Body of pancreas (tissue), 4 donors: ENCODE measurements at regions of chr2 and their contacts with region 1.

Region 1: GRCh38 chr2:197184959-197185586 is 125.5 kb downstream of the ANKRD44 start:
- DNase-seq: peak; percentile 72 to 82 (median 80)
- ATAC-seq: peak; percentile 88
- H3K4me3 ChIP-seq: no peak overlapping the region
- H3K27ac ChIP-seq: peak overlapping the region in 2 of 4 donors; percentile 15 to 25
- H3K4me1 ChIP-seq: peaks cover 9% of the 10 kb centered on the region
- H3K27me3 ChIP-seq: no peaks in the 10 kb centered on the region
- CTCF ChIP-seq: no peak
- POLR2A ChIP-seq: no peak

Region 2: DNA sequence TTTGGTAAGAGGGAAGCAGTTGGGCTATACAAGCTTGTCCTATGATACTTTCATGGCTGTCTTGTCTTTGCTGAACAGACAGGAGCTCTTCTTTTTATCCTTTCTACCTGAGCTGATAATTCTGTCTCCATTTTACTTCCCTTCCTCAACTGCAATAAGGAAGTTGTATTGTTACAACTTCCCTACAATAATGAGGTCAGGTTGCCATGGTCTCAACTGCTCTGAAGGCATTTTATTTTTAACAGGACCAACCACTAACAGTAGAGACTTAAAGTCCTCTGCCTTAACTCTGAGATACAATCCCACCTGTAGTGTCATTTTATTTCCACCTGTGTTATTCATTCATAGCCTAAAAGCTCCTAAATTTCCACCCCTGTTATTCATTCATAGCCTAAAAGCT is 140.0 kb before region 1 on chr2:
- intact Hi-C with region 1: no loop called
- DNase-seq: no peak
- ATAC-seq: no peak
- H3K4me3 ChIP-seq: no peak overlapping the region
- H3K27ac ChIP-seq: no peak overlapping the region
- H3K4me1 ChIP-seq: no peaks in the 10 kb centered on the region
- H3K27me3 ChIP-seq: no peaks in the 10 kb centered on the region
- CTCF ChIP-seq: no peak
- POLR2A ChIP-seq: no peak

Region 3: GRCh38 chr2:197059477-197059876 is 125.6 kb before region 1 on chr2:
- intact Hi-C with region 1: no loop called
- DNase-seq: no peak
- ATAC-seq: no peak
- H3K4me3 ChIP-seq: no peak overlapping the region
- H3K27ac ChIP-seq: no peak overlapping the region
- H3K4me1 ChIP-seq: no peaks in the 10 kb centered on the region
- H3K27me3 ChIP-seq: no peaks in the 10 kb centered on the region
- CTCF ChIP-seq: no peak
- POLR2A ChIP-seq: no peak

Region 4: DNA sequence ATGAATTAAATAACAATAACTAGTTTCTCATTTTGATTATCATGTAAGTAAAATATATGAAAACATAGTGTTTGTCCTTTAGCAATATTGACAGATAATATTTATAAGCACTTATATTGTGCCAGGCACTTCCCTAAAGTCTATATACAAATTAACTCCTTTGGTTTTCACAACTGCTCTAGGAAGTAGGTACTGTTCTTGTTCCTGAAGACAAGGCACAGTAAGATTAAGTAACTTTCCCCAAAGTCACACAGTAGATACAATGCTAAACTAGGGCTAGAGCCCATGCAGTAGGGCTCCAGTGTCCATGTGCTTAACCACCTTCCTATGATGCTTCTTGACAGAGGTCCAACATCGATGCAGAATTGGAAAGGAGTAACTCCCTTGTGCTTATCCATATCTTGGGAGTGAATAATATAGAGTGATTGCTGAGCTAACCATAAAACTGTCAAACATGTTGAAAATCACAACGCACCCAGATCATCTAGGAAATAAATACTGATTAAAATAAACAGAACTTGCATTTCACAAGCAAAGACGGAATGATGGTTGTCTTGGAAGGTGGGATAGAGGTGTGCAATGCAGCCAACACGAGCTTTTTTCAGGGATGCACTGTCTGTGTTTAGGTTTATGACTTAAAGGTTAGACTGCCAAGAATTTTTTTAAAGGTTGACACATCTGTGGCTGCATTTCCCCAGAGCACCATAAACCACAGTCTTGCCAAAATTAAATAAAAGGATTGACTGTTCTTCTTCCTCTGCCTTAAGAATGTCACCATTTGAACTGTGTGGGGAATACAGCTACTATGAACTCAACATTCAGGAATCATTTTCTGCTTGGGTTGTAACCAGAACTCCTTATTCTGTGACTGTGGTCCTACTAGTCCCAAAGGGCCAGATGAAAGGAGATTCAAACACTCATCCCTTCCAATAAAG is 44.7 kb after region 1 on chr2:
- intact Hi-C with region 1: no loop called
- DNase-seq: no peak
- ATAC-seq: no peak
- H3K4me3 ChIP-seq: no peak overlapping the region
- H3K27ac ChIP-seq: no peak overlapping the region
- H3K4me1 ChIP-seq: no peaks in the 10 kb centered on the region
- H3K27me3 ChIP-seq: no peaks in the 10 kb centered on the region
- CTCF ChIP-seq: no peak
- POLR2A ChIP-seq: no peak

Region 5: DNA sequence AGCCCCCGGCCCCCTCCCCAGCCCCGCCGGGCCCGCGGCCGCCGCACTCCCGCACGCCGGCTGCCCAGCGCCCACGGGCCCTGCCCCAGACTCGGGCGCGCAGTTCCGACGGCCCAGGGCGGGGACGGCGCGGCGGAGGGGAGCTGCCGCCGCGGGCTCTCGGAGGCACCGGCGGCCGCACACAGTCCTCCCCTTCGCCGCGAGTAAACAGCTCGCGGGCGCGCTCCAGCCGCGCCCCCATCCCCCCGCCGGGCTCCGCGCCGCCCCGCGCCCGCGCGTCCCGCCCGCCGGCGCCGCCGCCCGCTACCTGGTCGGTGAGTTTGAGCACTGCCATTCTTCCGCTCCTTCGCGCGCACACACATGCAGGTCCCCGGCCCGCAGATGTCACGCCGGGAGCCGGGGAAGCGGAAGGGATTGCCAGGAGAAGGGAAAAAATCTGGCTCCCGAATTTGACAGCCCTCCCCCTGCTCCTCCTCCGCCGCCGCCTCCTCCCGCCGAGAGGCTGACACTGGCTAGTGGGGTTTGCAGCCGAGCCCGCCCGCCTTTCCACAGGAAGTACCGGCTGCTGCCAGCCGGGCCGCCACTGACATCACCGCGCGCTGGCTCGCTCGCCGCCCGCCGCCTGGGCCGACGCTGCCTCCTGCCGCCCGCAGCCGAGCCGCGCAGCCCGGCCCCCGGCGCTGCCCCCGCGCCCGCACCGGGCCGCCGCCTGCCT is 125.4 kb after region 1 on chr2 and contains the start of gene ANKRD44:
- intact Hi-C with region 1: loop called (anchors 5 kb)
- DNase-seq: peak; percentile 91 to 93 (median 92)
- ATAC-seq: peak; percentile 93
- H3K4me3 ChIP-seq: peak within 1 kb of the TSS; percentile 33 to 47
- H3K27ac ChIP-seq: peak within 1 kb of the TSS; percentile 85 to 89 (median 88)
- H3K4me1 ChIP-seq: peaks cover 33% of the 10 kb centered on the region
- H3K27me3 ChIP-seq: no peaks in the 10 kb centered on the region
- CTCF ChIP-seq: peak; percentile 11 to 94 (median 53)
- POLR2A ChIP-seq: peak; percentile 75 to 87 (median 87)
- total RNA-seq, gene ANKRD44: 12.2 TPM